Ascending aorta (tissue), 2 donors: ENCODE measurements at regions of chr18 and their contacts with region 1.

Region 1: GRCh38 chr18:32424696-32425095 is 46.0 kb downstream of the GAREM1 start:
- DNase-seq: no peak
- H3K4me3 ChIP-seq: no peak overlapping the region
- H3K27ac ChIP-seq: no peak overlapping the region
- H3K4me1 ChIP-seq: peaks cover 6 to 44% of the 10 kb centered on the region in 2 donors
- H3K27me3 ChIP-seq: no peaks in the 10 kb centered on the region
- CTCF ChIP-seq: no peak

Region 2: GRCh38 chr18:32261003-32261402 is 163.7 kb before region 1 on chr18:
- intact Hi-C with region 1: no loop called
- DNase-seq: no peak
- H3K4me3 ChIP-seq: no peak overlapping the region
- H3K27ac ChIP-seq: no peak overlapping the region
- H3K4me1 ChIP-seq: no peaks in the 10 kb centered on the region
- H3K27me3 ChIP-seq: no peaks in the 10 kb centered on the region
- CTCF ChIP-seq: no peak

Region 3: DNA sequence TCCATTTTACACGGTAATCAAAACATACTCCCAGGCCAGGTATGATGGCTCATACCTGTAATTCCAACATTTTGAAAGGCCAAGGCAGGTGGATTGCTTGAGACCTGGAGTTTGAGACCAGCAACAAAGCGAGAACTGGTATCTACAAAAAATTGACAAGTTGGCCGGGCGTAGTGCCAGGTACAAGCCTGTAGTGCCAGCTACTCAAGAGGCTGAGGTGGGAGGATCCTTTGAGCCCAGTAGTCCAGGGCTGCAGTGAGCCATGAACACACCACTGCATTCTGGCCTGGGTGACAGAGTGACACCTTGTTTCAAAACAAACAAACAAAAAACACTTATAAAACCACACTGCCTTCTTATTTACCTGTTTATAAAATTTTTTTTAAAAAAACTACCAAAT is 34.8 kb before region 1 on chr18:
- intact Hi-C with region 1: loop called (anchors 5 kb)
- DNase-seq: no peak
- H3K4me3 ChIP-seq: no peak overlapping the region
- H3K27ac ChIP-seq: no peak overlapping the region
- H3K4me1 ChIP-seq: no peaks in the 10 kb centered on the region
- H3K27me3 ChIP-seq: no peaks in the 10 kb centered on the region
- CTCF ChIP-seq: no peak